ENCODE measurements at regions of chr15 and their contacts with region 1.

Region 1: DNA sequence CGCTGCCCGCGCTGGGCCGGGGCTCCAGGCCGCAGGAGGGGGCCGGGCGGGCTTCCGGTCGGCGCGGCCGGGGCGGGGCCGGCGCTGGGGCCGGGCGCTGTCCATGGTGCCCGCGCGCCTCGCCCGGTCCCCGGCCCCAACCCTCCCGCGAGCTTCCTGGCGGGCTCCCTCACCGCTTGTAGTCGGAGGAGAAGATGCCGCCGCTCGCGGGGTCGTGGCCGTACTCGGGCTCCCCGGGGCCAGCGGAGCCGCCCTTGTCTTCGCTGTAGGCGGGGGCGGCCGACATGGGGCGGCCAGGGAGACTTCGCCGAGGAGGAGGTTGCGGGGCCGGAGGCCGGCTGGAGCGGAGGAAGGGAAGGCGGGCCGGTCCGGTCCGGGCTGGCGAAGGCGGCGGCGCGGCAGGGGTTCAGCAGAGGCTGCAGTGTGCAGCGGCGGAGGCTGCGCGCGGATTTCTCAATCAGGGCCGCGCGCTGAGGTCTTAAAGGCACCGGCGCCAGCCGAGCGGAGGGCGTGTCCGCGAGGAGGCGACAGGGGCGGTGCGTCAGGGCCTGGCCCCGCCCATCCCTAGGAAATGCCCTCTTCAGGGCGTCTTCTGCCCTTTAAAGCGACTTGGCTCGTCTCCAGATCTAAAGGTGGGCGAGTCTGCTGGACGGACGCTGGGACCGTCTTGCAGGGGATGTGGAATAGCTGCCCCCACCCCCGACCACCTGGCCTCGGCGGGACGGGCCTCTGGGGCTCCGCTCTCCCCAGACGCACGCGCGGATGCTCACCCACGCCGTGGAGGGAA is at the start of gene AP3B2:
- DNase-seq: peak in 1 of 2 donors; percentile 71
- H3K4me3 ChIP-seq: peak within 1 kb of the TSS; percentile 73 to 74
- H3K27ac ChIP-seq: no peak within 1 kb of the TSS
- H3K4me1 ChIP-seq: peaks cover 7 to 11% of the 10 kb centered on the region in 2 donors
- H3K27me3 ChIP-seq: no peaks in the 10 kb centered on the region
- CTCF ChIP-seq: no peak
- total RNA-seq, gene AP3B2: not detected

Region 2: DNA sequence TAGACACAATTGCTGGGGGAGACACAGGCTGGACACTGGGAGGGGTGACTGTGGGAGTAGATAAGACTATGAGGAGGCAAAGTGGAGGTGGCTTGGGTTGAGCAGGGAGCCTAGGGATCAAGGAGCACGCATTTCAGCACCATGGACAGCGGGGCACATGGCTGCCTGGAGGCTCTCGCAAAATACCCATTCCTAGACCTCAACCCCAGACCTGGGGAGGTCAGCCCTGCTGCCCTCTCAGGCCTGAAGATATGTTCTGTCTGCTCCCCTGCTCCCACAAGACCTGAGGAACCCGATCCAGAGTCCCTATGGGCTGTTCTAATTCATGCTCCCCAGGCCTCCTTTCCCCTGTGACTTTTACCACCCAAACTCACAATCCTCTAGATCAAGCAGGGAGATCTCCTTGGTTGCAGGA is 46.4 kb before region 1 on chr15:
- intact Hi-C with region 1: loop called (anchors 5 kb)
- DNase-seq: no peak
- H3K4me3 ChIP-seq: no peak overlapping the region
- H3K27ac ChIP-seq: no peak overlapping the region
- H3K4me1 ChIP-seq: no peaks in the 10 kb centered on the region
- H3K27me3 ChIP-seq: no peaks in the 10 kb centered on the region
- CTCF ChIP-seq: no peak

Region 3: DNA sequence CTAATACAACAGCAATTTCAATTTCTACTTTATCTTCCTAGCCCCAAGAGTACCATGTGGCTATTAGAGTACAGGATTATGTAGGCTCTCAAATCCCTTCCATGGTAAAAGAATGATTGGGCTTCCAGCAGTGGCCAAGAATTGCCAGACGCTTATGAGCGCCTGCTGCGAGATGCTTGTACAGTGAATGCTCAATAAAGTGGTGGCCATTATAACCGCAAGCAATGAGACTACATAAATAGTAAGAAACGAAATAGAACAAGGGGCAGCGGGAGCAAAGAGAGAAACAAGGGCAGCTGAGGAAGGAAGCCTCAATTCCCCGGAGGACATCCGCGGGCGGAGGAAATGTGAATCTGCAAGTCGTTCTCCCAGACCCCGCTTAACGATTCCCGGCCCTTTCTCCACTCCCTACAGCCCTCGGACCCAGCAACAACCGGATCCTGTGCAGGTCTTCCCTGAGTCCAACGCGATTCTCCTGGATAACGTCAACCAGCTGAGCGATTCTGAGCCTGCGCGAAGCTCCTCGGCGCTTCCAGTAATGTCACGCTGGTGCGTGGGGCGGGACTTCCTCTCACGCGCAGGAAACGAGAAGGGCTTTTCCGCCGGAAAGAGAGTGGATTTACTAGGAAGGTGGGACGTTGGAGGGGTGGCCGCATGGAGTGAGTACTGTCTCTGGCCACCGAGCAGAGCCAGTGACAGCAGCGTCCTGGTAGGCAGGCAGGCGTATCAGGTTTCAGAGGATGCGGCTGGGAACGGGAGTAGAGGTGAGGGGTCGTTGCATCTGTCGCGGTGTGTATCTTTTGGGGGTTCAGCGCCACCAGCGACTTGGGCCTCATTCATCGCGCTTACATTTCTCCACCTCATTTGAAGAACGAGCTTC is 40.6 kb after region 1 on chr15:
- intact Hi-C with region 1: loop called (anchors 2 kb)
- DNase-seq: peak; percentile 73 to 95
- H3K4me3 ChIP-seq: peak overlapping the region; percentile 73 to 90
- H3K27ac ChIP-seq: peak overlapping the region; percentile 85 to 89
- H3K4me1 ChIP-seq: peaks cover 5 to 7% of the 10 kb centered on the region in 2 donors
- H3K27me3 ChIP-seq: no peaks in the 10 kb centered on the region
- CTCF ChIP-seq: no peak

Region 4: DNA sequence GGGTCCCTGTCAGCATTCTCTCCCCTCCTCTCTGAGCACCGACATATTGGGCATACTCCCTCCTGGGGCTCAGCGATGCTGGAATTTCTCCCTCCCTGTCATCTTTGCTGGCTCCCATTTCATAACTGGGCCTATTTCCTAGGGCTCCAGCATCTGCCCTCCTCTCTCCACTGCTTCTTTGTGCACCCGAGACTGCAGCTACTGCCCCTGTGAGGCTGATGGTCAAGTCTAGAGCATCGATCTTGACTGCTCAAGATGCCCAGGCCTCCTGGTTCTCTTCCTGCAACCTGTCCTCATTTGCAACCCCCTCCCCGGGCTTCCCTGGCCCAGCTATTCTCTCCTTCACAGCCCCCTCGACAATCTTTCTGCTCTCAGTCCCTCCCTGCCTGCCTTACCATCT is 153.3 kb after region 1 on chr15:
- intact Hi-C with region 1: no loop called
- DNase-seq: no peak
- H3K4me3 ChIP-seq: no peak overlapping the region
- H3K27ac ChIP-seq: no peak overlapping the region
- H3K4me1 ChIP-seq: no peaks in the 10 kb centered on the region
- H3K27me3 ChIP-seq: no peaks in the 10 kb centered on the region
- CTCF ChIP-seq: no peak